Calu3 (cell line): ENCODE measurements at regions of chr16 and their contacts with region 1.

Region 1: DNA sequence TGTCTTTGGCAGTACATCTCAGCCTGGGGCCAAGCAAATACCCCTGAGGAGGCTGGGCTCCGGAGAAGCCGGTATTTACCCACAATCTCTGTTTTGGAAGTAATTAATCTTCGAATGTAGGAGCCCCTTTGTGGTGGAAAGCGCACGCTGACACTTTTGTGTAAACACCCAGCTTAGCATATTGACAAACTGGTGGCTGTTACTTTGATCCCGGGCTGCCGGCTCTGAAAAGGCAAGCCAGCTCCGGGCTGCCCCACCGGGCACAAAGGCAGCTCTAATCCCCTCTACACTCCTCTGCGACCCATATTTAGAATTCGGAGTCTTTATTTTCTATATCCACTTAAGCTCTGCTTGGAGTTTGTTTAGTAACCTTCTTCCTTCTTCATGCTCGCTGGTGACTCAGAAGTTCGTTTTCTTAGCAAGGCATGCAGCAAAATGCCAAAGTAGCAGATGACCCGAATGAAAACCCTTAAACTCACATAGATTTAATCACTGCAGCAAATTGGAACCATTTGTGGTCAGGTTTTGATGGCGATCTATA is 144.0 kb upstream of the IRX3 start:
- DNase-seq: no peak
- H3K4me3 Mint-ChIP-seq: no peak overlapping the region
- H3K27ac Mint-ChIP-seq: no peak overlapping the region
- H3K4me1 Mint-ChIP-seq: no peaks in the 10 kb centered on the region
- H3K27me3 Mint-ChIP-seq: peaks cover 91% of the 10 kb centered on the region
- CTCF ChIP-seq: no peak

Region 2: DNA sequence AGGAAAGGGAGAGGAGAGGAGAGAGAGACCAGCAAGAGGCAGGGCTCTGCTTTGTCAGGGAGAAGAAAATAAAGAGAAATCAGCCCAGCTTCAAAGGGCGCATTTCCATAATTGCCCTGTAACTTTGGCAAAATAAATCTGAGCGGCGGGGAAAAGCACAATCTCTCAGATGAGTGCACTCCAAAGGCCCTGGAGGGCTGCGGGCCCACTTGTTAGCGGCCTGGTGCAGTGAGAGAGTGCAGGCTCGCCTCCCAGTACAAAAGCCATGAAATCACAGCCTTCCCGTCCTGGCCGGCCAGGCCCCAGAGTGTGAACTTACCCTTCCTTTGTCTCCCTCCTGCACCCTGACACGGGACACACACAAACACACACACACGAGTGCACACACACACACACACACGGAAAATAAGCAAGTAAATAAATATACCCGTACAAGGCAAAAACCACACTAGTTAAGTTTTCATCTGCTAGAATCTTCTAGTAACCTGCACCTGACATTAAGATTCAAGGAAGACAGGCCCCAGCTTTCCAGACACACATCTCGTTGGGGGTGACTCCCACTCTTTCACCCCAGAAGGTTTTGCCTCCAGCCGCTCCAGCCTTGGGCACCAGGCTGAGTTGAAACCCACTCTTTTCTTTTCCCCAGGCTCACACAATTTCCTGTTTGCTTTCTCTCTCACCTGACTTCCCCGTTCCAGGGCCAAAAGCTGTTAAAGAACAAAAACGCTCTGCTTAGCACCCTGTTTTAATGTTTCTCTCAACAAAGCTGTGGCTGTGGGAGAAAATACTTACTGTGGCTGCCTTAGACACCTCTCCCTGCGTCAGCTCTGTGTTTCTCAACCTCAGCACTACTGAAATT is 152.5 kb before region 1 on chr16:
- CTCF ChIA-PET with region 1: no interaction called
- intact Hi-C with region 1: loop called (anchors 10 kb)
- DNase-seq: no peak
- H3K4me3 Mint-ChIP-seq: no peak overlapping the region
- H3K27ac Mint-ChIP-seq: no peak overlapping the region
- H3K4me1 Mint-ChIP-seq: no peaks in the 10 kb centered on the region
- H3K27me3 Mint-ChIP-seq: peaks cover 20% of the 10 kb centered on the region
- CTCF ChIP-seq: no peak

Region 3: GRCh38 chr16:54503011-54503855 is 72.7 kb after region 1 on chr16:
- CTCF ChIA-PET with region 1: no interaction called
- intact Hi-C with region 1: no loop called
- DNase-seq: no peak
- H3K4me3 Mint-ChIP-seq: no peak overlapping the region
- H3K27ac Mint-ChIP-seq: no peak overlapping the region
- H3K4me1 Mint-ChIP-seq: no peaks in the 10 kb centered on the region
- H3K27me3 Mint-ChIP-seq: peaks cover 58% of the 10 kb centered on the region
- CTCF ChIP-seq: no peak

Region 4: DNA sequence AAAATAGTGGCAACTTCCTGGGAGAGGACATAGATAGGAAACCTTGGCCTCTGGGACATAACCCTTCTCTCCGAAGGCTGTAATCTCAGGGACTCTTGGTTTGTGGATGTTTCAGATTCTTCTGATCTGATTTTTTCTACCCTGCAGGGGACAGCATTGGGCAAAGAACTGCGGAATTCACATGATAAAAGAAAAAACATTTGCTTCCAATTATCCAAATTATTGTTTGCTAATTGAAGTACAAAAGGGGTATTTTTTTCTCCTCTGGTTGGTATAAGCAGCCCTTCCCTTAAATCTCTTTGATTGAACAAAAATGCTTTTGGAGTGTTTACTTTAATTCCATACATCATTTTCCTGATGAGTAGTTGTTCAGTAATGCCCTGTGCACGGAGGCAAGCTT is 107.7 kb after region 1 on chr16:
- CTCF ChIA-PET with region 1: no interaction called
- intact Hi-C with region 1: no loop called
- DNase-seq: no peak
- H3K4me3 Mint-ChIP-seq: no peak overlapping the region
- H3K27ac Mint-ChIP-seq: no peak overlapping the region
- H3K4me1 Mint-ChIP-seq: no peaks in the 10 kb centered on the region
- H3K27me3 Mint-ChIP-seq: peaks cover 50% of the 10 kb centered on the region
- CTCF ChIP-seq: no peak

Region 5: DNA sequence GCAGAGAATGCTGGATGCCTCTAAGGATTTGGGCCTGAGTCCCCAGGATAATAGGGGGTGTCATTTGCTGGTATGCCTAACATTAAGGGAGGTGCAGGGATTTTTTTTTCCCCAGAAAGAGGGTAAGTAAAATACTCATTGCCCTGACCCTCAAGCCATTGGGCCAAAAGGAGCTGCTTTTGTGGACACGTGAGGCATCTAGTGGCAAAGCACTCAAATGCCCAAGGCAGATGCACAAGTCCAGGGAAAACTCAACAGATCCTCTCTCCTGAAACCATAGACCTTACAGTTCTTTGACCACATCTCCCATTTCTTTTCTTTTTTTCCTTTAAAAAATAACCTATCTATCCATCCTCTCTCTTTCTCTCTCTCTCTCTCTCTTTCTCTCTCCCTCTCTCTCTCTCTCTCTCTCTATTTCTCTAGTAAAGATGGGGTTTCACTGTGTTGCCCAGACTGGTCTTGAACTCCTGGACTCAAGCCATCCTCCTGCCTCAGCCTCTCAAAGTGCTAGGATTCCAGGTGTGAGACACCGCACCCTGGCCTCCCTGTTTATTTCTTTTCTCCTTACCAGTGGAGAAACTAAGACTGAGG is 511.9 kb after region 1 on chr16:
- CTCF ChIA-PET with region 1: no interaction called
- intact Hi-C with region 1: no loop called
- DNase-seq: no peak
- H3K4me3 Mint-ChIP-seq: no peak overlapping the region
- H3K27ac Mint-ChIP-seq: no peak overlapping the region
- H3K4me1 Mint-ChIP-seq: no peaks in the 10 kb centered on the region
- H3K27me3 Mint-ChIP-seq: no peaks in the 10 kb centered on the region
- CTCF ChIP-seq: no peak